ENCODE measurements at regions of chr6 and their contacts with region 1.

Region 1: GRCh38 chr6:46234700-46235099 is 63.9 kb upstream of the ENPP5 start:
- DNase-seq: no peak
- H3K4me3 ChIP-seq: no peak overlapping the region
- H3K27ac ChIP-seq: peak overlapping the region; percentile 14
- H3K4me1 ChIP-seq: no peaks in the 10 kb centered on the region
- H3K27me3 ChIP-seq: no peaks in the 10 kb centered on the region
- CTCF ChIP-seq: no peak
- POLR2A ChIP-seq: no peak

Region 2: DNA sequence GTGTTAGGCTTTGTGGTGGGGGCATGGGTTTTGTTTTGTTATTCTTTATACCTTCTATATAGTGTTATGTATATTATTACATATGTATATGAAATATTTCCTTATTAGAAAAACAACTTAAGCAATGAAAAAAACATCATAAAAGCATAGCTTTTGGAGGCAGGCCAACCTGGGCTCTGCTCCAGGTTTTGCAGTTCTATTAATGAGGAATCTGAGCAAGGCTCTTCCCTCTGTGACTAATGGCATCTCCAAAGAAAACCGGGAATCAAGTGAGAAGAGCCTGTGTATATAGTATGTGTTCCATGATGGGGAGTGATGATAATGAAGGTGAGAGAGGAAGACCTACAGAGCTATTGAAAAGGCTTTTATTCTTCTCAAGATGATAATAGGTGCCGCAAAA is 510.2 kb before region 1 on chr6:
- intact Hi-C with region 1: no loop called
- DNase-seq: no peak
- H3K4me3 ChIP-seq: no peak overlapping the region
- H3K27ac ChIP-seq: no peak overlapping the region
- H3K4me1 ChIP-seq: no peaks in the 10 kb centered on the region
- H3K27me3 ChIP-seq: no peaks in the 10 kb centered on the region
- CTCF ChIP-seq: no peak
- POLR2A ChIP-seq: no peak

Region 3: GRCh38 chr6:47061309-47062300 is 826.9 kb after region 1 on chr6:
- intact Hi-C with region 1: loop called (anchors 5 kb)
- DNase-seq: no peak
- H3K4me3 ChIP-seq: no peak overlapping the region
- H3K27ac ChIP-seq: no peak overlapping the region
- H3K4me1 ChIP-seq: no peaks in the 10 kb centered on the region
- H3K27me3 ChIP-seq: no peaks in the 10 kb centered on the region
- CTCF ChIP-seq: no peak
- POLR2A ChIP-seq: no peak